HEK293T (cell line): ENCODE measurements at regions of chr10 and their contacts with region 1.

Region 1: DNA sequence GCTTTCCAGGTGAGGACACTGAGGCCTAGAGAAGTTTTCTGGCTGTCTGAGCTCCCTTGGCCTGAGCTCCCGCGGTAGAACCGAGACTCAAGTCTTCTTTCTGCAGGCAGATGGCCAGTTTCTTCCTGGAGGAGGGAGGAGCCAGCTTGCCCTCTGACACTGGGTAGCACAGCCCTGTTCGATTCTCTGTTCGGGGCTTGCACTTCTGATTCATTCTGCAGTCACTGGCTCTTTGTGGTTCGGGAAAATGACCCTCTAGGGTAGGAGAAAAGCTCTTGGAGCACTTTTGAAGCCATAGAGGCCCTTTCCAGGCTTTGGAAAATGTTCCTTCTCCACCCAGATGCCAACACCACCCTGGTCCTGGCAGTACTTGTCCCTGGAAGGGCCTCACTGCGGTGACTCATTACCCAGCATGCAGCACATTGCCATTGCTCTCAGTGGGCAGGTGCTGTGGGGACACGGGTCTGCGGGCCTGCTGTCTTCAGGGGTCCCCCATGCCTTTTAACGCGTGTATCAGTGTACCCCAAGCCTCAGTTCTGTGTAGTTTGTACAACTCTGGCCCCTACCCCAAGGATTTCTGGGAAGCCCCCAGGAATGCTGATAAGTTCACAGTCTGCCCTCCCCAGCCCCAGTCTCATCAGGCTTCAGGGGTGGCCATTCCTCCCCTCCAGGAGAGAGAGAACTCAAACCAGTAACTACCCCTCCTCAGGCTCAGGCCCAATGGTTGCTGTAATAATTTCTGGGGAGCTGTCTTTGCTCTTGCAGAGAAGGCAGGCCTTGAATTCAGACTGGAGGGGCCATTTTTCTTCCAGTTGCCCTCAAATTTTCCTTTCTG is 11.9 kb downstream of the CHST3 start:
- DNase-seq: no peak

Region 2: GRCh38 chr10:71902351-71902750 is 73.8 kb before region 1 on chr10:
- CTCF ChIA-PET with region 1: no interaction called
- POLR2A ChIA-PET with region 1: no interaction called
- DNase-seq: no peak

Region 3: DNA sequence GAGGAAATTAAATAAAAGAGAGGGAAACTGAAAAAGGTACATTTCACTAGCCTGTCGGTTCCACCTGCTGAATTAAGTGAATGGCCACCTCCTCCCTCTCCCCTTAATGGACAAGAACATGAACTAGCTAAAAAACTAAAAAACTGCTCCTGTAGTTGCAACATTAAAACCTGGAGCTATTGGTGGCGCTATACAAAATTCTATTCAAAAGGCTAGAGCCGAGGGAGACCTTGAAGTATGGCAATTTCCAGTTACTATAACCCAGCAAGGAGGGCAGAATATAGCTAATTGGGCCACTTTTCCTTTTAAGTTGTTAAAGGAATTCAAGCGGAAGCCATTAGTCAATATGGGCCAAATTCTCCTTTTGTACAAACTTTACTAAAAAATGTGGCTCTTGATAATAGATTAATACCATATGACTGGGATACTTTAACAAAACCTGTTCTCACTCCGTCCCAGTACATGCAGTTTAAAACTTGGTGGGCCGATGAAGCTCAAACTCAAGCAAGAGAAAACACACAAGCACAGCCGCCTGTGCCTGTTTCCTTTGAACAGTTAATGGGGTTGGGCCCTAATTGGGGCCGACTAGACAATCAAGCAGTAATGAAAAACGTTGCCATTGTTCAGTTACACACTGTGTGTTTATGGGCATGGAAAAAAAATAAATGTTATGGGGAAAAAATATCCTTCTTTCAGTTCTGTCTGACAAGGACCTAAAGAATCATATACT is 18.4 kb before region 1 on chr10:
- CTCF ChIA-PET with region 1: interaction called, 11 read pairs
- POLR2A ChIA-PET with region 1: interaction called, 5 read pairs
- DNase-seq: no peak